IMR-90 (cell line): ENCODE measurements at regions of chr22 and their contacts with region 1.

Region 1: GRCh38 chr22:26894766-26895485 is 237.5 kb downstream of the MIAT start:
- DNase-seq: peak; percentile 92
- ATAC-seq: peak; percentile 98
- H3K4me3 ChIP-seq: no peak overlapping the region
- H3K27ac ChIP-seq: peak overlapping the region; percentile 94
- H3K4me1 ChIP-seq: peaks cover 24% of the 10 kb centered on the region; the same call in 1 of the 2 replicates
- H3K27me3 ChIP-seq: peaks cover 8% of the 10 kb centered on the region; the same call in 1 of the 2 replicates
- CTCF ChIP-seq: no peak
- POLR2A ChIP-seq: no peak
- RAD21 ChIP-seq: peak; percentile 11; the same call in 1 of the 2 replicates

Region 2: DNA sequence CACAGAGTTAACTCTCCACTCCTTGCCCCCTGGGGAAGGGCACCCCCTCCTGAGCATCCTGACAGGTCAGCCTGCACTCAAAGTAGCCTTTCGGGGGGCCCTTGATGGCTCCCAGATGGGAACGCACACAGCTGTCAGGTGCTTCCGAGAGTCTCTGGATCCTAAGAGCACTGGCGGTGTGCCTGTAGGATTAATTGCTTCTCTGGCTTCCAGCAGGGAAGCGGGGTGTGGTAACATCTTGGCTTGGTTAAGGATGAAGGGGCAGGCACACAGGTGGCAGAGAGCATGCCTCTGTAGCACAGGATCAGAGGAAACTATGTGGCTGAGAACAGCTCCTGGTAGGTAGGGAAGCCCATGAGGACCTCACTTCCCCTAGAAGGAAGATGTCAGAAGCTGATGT is 37.8 kb before region 1 on chr22:
- CTCF ChIA-PET with region 1: no interaction called
- POLR2A ChIA-PET with region 1: no interaction called
- dilution Hi-C with region 1: no loop called
- in situ Hi-C with region 1: no loop called
- intact Hi-C with region 1: no loop called
- DNase-seq: no peak
- ATAC-seq: no peak
- H3K4me3 ChIP-seq: no peak overlapping the region
- H3K27ac ChIP-seq: no peak overlapping the region
- H3K4me1 ChIP-seq: no peaks in the 10 kb centered on the region
- H3K27me3 ChIP-seq: peaks cover 29% of the 10 kb centered on the region
- CTCF ChIP-seq: no peak
- POLR2A ChIP-seq: no peak
- RAD21 ChIP-seq: no peak

Region 3: DNA sequence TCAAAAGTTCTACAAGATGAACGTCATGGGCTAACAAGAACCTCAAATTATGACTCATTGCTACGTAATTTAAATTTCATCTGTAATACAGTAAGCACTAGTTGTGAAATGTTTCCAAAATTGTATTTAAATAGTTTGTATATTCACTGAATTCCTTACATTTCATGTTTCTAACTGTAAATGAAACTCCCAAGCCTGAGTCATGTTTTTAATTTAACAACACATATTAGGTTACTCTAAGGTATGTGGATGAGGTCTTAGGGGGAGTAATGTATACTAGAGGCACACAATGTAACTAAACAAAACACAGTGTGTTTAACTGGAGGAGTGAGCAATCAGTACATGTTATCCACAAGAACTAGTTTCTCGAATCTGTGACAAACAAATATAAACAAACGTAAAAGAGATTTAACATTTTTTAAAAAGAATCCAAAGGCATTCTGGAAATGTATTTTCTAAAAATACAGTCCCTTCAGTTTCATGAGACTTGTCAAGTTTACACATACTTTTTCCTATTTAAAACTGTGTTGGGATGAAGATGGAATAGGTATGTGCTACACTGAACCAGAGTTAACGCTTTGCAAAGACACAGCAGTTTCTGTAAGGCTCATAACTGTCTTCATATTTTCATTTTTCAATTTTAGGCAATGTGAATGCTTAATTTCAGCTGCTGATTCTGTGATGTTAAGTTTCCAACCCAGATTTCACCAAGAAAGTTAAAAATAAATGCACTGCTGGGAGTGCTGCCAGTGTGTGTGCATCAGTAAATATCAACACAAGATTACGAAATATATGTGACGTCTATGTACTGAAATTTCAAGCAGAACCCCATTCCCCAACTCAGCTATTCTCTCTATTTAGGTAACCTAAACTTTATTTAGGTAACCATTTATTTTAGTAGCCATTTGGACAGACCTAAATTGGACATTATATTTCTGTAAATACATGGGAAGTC is 971.5 kb after region 1 on chr22:
- CTCF ChIA-PET with region 1: no interaction called
- POLR2A ChIA-PET with region 1: no interaction called
- dilution Hi-C with region 1: no loop called
- in situ Hi-C with region 1: no loop called
- intact Hi-C with region 1: loop called (anchors 10 kb)
- DNase-seq: peak; percentile 99
- ATAC-seq: peak; percentile 88
- H3K4me3 ChIP-seq: no peak overlapping the region
- H3K27ac ChIP-seq: peak overlapping the region; percentile 100; the same call in 1 of the 2 replicates
- H3K4me1 ChIP-seq: peaks cover 36% of the 10 kb centered on the region
- H3K27me3 ChIP-seq: no peaks in the 10 kb centered on the region
- CTCF ChIP-seq: no peak
- POLR2A ChIP-seq: no peak
- RAD21 ChIP-seq: no peak